Motor neuron (in vitro differentiated cells): ENCODE measurements at regions of chr16 and their contacts with region 1.

Region 1: GRCh38 chr16:20938426-20938825 is 37.9 kb downstream of the LYRM1 start:
- ATAC-seq: peak in 2 of 8 experiments; percentile 9 to 29
- H3K4me3 ChIP-seq: no peak overlapping the region
- H3K27ac ChIP-seq: no peak overlapping the region
- H3K4me1 ChIP-seq: no peaks in the 10 kb centered on the region

Region 2: GRCh38 chr16:20774703-20775362 is 163.6 kb before region 1 on chr16:
- in situ Hi-C with region 1: no loop called
- ATAC-seq: peak in 5 of 8 experiments; percentile 33 to 99 (median 95)
- H3K4me3 ChIP-seq: no peak overlapping the region
- H3K27ac ChIP-seq: no peak overlapping the region
- H3K4me1 ChIP-seq: no peaks in the 10 kb centered on the region

Region 3: GRCh38 chr16:20995711-20996110 is 57.3 kb after region 1 on chr16:
- in situ Hi-C with region 1: loop called in 1 of 9 experiments (anchors 10 kb)
- ATAC-seq: no peak
- H3K4me3 ChIP-seq: no peak overlapping the region
- H3K27ac ChIP-seq: no peak overlapping the region
- H3K4me1 ChIP-seq: no peaks in the 10 kb centered on the region

Region 4: DNA sequence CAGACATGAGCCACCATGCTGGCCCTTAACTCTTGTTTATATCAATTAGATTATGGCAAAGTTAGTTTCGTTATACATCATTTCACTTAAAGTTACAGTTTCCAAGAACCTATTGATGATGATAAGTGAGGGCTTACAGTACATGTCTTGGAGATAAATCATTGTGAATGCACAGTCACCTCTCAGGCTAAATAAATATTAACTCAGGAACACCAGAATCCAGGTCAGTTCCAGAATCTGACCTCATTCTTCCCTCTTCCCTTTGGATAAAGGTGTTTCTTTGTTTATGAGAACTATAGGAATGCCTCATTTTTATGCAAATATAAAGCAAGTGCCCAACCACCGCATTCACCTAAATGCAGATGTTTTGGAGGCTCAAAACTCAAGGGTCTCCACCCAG is 388.0 kb after region 1 on chr16:
- in situ Hi-C with region 1: no loop called
- ATAC-seq: no peak
- H3K4me3 ChIP-seq: no peak overlapping the region
- H3K27ac ChIP-seq: no peak overlapping the region
- H3K4me1 ChIP-seq: no peaks in the 10 kb centered on the region

Region 5: DNA sequence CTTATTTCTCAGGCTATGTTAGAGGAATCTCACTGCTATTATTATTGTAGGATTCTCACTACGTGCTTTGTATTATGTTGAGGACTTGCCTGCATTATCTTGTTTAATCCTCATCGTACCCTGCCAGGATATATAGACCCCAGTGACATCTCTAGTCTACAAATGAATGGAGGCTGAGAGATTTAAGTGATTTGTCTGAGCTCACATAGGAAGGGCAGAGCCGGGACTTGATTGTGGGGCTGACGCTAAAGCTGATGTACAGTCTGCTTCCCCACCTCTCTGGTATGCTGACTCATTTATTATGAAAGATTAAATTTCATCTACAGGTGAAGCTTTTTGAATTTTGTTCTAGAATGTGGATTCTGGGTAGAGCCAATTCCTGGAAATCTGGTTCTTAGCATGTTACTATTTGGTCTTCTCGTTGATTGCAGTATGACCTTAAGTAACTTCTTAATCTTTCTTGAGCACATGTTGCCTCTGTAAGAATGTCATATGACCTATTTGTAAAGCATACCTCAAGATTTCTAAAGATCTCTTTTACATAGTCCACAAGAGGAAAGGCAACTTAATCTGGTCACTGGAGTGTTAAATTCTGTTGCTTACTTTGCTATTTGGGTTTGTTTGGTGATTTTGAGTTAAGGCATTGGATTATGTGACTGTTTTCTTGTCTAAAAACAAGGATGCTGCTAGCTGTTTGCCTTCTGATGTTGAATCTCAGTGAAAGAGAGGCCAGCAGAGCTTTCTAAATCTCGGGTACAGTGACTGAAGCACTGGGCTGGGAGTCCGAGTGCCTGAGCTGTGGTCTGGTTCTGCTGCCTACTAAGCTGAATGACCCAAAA is 673.3 kb after region 1 on chr16:
- in situ Hi-C with region 1: no loop called
- ATAC-seq: peak; percentile 22 to 77 (median 52)
- H3K4me3 ChIP-seq: no peak overlapping the region
- H3K27ac ChIP-seq: no peak overlapping the region
- H3K4me1 ChIP-seq: peaks cover 16 to 42% of the 10 kb centered on the region in 2 donors

Region 6: GRCh38 chr16:22091758-22092600 is 1153.6 kb after region 1 on chr16 and contains the start of gene VWA3A:
- in situ Hi-C with region 1: no loop called
- ATAC-seq: peak; percentile 79 to 96 (median 88)
- H3K4me3 ChIP-seq: peak within 1 kb of the TSS in 1 of 5 donors; percentile 8
- H3K27ac ChIP-seq: peak within 1 kb of the TSS in 1 of 2 donors; percentile 54
- H3K4me1 ChIP-seq: peaks cover 7 to 20% of the 10 kb centered on the region in 2 donors
- total RNA-seq, gene VWA3A: 0.09 to 18.7 (median 0.62) TPM in 7 of 8 experiments, not detected in the other